Lower leg skin (tissue), 4 donors: ENCODE measurements at regions of chr10 and their contacts with region 1.

Region 1: DNA sequence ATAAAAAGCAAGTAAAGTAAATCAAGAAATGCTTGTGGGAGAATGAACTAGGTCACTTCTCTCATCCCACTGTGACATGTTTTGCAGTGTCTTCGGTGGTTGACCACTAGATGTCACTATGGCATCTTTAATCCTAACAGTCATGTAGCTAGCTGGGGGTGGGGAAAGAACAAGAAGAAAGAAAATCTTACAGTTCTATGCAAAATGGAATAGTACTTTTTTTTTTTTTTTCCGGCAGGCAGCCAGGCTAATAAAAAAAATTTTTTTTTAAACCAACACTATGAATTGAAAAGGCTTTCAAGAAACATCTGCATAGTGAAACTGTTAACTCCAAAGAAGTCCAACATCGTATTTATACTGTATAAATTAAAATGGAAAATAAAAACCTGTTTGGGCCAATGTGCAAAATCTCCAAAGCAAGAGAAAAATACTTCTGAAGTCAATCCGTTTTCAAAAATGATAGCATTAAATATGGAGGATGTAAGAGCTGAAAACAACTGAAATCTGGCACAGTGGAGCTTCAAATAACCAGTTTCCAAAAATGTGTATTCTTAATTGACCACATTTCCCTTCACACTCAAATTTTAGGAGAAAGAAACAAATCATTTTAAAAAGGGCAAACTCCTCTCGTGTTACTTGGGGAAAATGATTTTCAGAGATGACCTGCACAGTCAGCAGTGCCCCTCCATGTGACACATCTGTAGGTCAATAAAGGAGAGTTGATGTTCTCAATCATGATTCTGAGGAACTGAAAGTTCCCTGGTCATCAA is 38.5 kb downstream of the CDK1 start:
- DNase-seq: peak in 1 of 2 donors; percentile 63
- H3K4me3 ChIP-seq: no peak overlapping the region
- CTCF ChIP-seq: no peak
- POLR2A ChIP-seq: no peak

Region 2: DNA sequence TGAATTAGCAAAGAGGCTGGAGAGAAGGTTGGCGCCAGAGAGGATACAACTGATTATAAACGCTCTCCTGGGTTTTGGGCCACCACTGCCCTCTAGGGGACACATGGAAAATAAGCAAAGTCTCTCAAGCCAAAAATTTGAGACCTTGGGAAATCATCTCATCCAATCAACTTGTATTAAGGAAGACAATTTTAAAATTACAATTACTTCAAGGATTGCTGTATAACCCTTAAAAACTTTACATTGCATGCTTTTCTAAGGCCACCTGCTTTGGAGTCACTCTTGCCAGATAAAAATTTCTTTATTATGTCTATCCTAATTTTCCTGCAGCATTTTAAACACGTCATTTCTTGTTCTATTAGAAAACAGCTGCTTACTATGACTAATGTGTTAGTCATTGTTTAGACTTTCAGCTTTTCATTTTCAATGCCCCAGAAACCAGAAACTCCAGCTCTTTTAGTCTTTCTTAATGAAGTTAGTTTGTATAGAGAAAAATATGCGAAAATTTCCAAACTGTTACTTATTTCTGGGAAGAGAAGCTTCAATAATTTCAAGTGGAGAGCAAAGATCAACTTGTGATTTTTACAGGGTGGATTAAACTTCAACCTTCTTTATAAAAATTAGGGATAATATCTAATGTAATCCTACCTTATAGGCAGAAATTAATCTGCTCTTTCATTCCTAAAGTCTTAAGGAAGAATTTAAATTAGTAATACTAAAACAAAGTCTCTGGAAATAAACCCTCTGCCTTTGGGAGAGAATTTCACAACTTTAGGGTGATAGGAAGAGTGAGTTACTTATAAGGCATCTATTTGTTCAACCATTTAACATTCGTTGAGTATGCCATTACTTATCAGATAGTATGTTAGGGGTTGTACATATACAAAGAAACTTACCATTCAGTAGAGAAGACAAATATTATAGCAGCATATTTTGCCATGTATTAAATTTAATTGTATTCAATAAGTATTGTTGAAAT is 147.7 kb after region 1 on chr10:
- intact Hi-C with region 1: loop called (anchors 10 kb)
- DNase-seq: peak; percentile 69 to 92
- H3K4me3 ChIP-seq: no peak overlapping the region
- CTCF ChIP-seq: peak in 1 of 3 donors; percentile 34
- POLR2A ChIP-seq: no peak

Region 3: GRCh38 chr10:61284222-61284890 is 467.5 kb after region 1 on chr10:
- intact Hi-C with region 1: loop called (anchors 10 kb)
- DNase-seq: no peak
- H3K4me3 ChIP-seq: no peak overlapping the region
- CTCF ChIP-seq: no peak
- POLR2A ChIP-seq: no peak